ENCODE measurements at regions of chr14 and their contacts with region 1.

Region 1: GRCh38 chr14:19878029-19878642 is 3.2 kb downstream of the OR4K2 start:
- DNase-seq: peak; percentile 19
- H3K4me3 ChIP-seq: no peak overlapping the region
- H3K27ac ChIP-seq: no peak overlapping the region
- H3K4me1 ChIP-seq: no peaks in the 10 kb centered on the region
- H3K27me3 ChIP-seq: peaks cover 14% of the 10 kb centered on the region; the same call in 1 of the 2 replicates
- CTCF ChIP-seq: peak; percentile 87
- EP300 ChIP-seq: no peak
- RAD21 ChIP-seq: peak; percentile 43

Region 2: GRCh38 chr14:19895282-19895681 is 17.1 kb after region 1 on chr14:
- CTCF ChIA-PET with region 1: interaction called, 10 read pairs
- POLR2A ChIA-PET with region 1: no interaction called
- DNase-seq: no peak
- H3K4me3 ChIP-seq: no peak overlapping the region
- H3K27ac ChIP-seq: no peak overlapping the region
- H3K4me1 ChIP-seq: no peaks in the 10 kb centered on the region
- H3K27me3 ChIP-seq: no peaks in the 10 kb centered on the region
- CTCF ChIP-seq: no peak
- EP300 ChIP-seq: no peak
- RAD21 ChIP-seq: no peak

Region 3: GRCh38 chr14:19911114-19911513 is 33.0 kb after region 1 on chr14:
- CTCF ChIA-PET with region 1: no interaction called
- POLR2A ChIA-PET with region 1: no interaction called
- DNase-seq: no peak
- H3K4me3 ChIP-seq: no peak overlapping the region
- H3K27ac ChIP-seq: no peak overlapping the region
- H3K4me1 ChIP-seq: no peaks in the 10 kb centered on the region
- H3K27me3 ChIP-seq: no peaks in the 10 kb centered on the region
- CTCF ChIP-seq: no peak
- EP300 ChIP-seq: no peak
- RAD21 ChIP-seq: no peak

Region 4: DNA sequence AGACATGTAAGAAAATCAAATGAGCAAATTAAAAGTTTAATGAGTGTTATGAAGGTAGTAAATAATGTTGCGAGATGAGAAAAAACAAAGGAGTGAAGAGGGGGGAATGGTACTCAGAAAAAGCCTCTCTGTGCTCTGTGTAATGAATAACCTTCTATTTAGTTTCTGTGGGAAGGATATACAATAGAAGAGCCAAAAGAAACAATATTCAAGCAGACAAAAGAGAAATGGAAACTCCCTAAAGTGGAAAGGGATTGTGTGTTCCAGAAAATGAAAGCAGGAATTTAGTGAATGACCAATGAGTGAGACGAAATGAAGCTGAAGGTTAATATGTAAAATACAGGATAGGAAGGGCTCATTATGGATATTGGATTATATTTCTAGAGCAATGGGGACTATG is 71.1 kb after region 1 on chr14:
- CTCF ChIA-PET with region 1: no interaction called
- POLR2A ChIA-PET with region 1: no interaction called
- DNase-seq: no peak
- H3K4me3 ChIP-seq: no peak overlapping the region
- H3K27ac ChIP-seq: no peak overlapping the region
- H3K4me1 ChIP-seq: no peaks in the 10 kb centered on the region
- H3K27me3 ChIP-seq: no peaks in the 10 kb centered on the region
- CTCF ChIP-seq: no peak
- EP300 ChIP-seq: no peak
- RAD21 ChIP-seq: no peak

Region 5: GRCh38 chr14:20143911-20144310 is 265.8 kb after region 1 on chr14:
- CTCF ChIA-PET with region 1: no interaction called
- POLR2A ChIA-PET with region 1: no interaction called
- DNase-seq: no peak
- H3K4me3 ChIP-seq: no peak overlapping the region
- H3K27ac ChIP-seq: no peak overlapping the region
- H3K4me1 ChIP-seq: no peaks in the 10 kb centered on the region
- H3K27me3 ChIP-seq: peaks cover 6% of the 10 kb centered on the region; the same call in 1 of the 2 replicates
- CTCF ChIP-seq: peak; percentile 29
- EP300 ChIP-seq: no peak
- RAD21 ChIP-seq: no peak

Measured in SK-N-SH (cell line).